Spleen (tissue), 13 donors: ENCODE measurements at regions of chr1 and their contacts with region 1.

Region 1: GRCh38 chr1:27102707-27103491 is 52.0 kb downstream of the SLC9A1 start:
- DNase-seq: peak; percentile 94
- H3K4me3 ChIP-seq: no peak overlapping the region
- H3K27ac ChIP-seq: peak overlapping the region in 2 of 8 donors; percentile 13 to 24
- H3K4me1 ChIP-seq: peaks cover 24 to 52% (median 35%) of the 10 kb centered on the region in 6 donors
- H3K27me3 ChIP-seq: no peaks in the 10 kb centered on the region
- CTCF ChIP-seq: peak; percentile 96 to 99 (median 98)
- POLR2A ChIP-seq: no peak

Region 2: GRCh38 chr1:26991310-26992116 is 111.4 kb before region 1 on chr1:
- intact Hi-C with region 1: no loop called
- DNase-seq: no peak
- H3K4me3 ChIP-seq: no peak overlapping the region
- H3K27ac ChIP-seq: no peak overlapping the region
- H3K4me1 ChIP-seq: peaks cover 10 to 46% (median 28%) of the 10 kb centered on the region in 6 donors
- H3K27me3 ChIP-seq: peaks cover 0 to 79% (median 23%) of the 10 kb centered on the region in 7 donors
- CTCF ChIP-seq: no peak
- POLR2A ChIP-seq: no peak

Region 3: GRCh38 chr1:27057801-27058625 is 44.9 kb before region 1 on chr1:
- intact Hi-C with region 1: no loop called
- DNase-seq: no peak
- H3K4me3 ChIP-seq: no peak overlapping the region
- H3K27ac ChIP-seq: peak overlapping the region in 2 of 8 donors; percentile 25 to 41
- H3K4me1 ChIP-seq: peaks cover 0 to 11% (median 0%) of the 10 kb centered on the region in 6 donors
- H3K27me3 ChIP-seq: no peaks in the 10 kb centered on the region
- CTCF ChIP-seq: no peak
- POLR2A ChIP-seq: no peak

Region 4: DNA sequence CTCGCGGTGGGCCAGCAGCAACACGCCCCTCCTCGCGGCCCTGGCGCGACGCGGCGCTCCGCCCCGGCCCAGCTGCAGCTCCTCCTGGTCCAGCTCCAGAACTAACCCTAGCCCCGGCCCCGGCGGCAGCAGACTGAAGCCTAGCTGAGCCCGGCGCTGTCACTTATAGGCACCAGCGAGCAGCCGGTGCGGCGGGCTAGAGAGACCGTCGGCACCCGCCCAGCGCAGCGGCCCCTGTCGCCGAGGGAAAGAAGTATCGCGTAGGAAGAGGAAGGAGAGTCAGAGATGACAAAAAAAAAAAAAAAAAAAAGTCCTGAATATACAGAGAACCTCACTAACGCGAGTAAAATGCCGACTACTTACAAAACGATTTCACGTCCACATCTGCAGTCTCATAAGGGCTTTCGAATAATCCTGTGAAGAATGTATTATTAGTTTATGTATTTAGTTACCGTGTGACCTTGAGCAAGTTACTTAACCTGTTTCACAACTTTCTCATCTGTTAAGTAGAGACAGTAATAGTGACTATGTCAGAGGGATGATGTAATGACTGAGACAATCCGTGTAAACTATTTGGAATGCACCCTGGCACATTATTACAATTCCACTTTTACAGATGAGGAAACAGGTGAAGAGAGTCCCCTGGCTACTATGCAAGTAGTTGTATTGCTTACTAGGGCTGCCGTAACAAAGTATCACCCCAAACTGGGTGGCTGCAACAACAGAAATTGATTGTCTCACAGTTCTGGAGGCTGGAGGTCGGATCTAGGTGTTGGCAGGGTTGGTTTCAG is 52.3 kb after region 1 on chr1 and contains the start of gene SLC9A1:
- intact Hi-C with region 1: loop called (anchors 10 kb)
- DNase-seq: peak; percentile 99
- H3K4me3 ChIP-seq: peak within 1 kb of the TSS; percentile 42 to 86 (median 62)
- H3K27ac ChIP-seq: peak within 1 kb of the TSS; percentile 84 to 97 (median 92)
- H3K4me1 ChIP-seq: peaks cover 32 to 60% (median 53%) of the 10 kb centered on the region in 6 donors
- H3K27me3 ChIP-seq: no peaks in the 10 kb centered on the region
- CTCF ChIP-seq: peak; percentile 76 to 94 (median 87)
- POLR2A ChIP-seq: peak; percentile 96 to 100 (median 99)
- total RNA-seq, gene SLC9A1: 21.2 to 40.4 (median 35.0) TPM

Region 5: GRCh38 chr1:27192039-27192529 is 89.2 kb after region 1 on chr1:
- intact Hi-C with region 1: loop called (anchors 10 kb)
- DNase-seq: peak; percentile 30
- H3K4me3 ChIP-seq: no peak overlapping the region
- H3K27ac ChIP-seq: peak overlapping the region in 5 of 8 donors; percentile 29 to 58 (median 37)
- H3K4me1 ChIP-seq: peaks cover 0 to 25% (median under 1%) of the 10 kb centered on the region in 6 donors
- H3K27me3 ChIP-seq: no peaks in the 10 kb centered on the region
- CTCF ChIP-seq: no peak
- POLR2A ChIP-seq: no peak

Region 6: GRCh38 chr1:27284425-27285273 is 181.8 kb after region 1 on chr1:
- intact Hi-C with region 1: loop called (anchors 2 kb)
- DNase-seq: peak; percentile 93
- H3K4me3 ChIP-seq: no peak overlapping the region
- H3K27ac ChIP-seq: peak overlapping the region in 2 of 8 donors; percentile 1 to 28
- H3K4me1 ChIP-seq: peaks cover 0 to 22% (median 2%) of the 10 kb centered on the region in 6 donors
- H3K27me3 ChIP-seq: no peaks in the 10 kb centered on the region
- CTCF ChIP-seq: peak; percentile 82 to 95 (median 90)
- POLR2A ChIP-seq: no peak